K562 (cell line): ENCODE measurements at regions of chr5 and their contacts with region 1.

Region 1: DNA sequence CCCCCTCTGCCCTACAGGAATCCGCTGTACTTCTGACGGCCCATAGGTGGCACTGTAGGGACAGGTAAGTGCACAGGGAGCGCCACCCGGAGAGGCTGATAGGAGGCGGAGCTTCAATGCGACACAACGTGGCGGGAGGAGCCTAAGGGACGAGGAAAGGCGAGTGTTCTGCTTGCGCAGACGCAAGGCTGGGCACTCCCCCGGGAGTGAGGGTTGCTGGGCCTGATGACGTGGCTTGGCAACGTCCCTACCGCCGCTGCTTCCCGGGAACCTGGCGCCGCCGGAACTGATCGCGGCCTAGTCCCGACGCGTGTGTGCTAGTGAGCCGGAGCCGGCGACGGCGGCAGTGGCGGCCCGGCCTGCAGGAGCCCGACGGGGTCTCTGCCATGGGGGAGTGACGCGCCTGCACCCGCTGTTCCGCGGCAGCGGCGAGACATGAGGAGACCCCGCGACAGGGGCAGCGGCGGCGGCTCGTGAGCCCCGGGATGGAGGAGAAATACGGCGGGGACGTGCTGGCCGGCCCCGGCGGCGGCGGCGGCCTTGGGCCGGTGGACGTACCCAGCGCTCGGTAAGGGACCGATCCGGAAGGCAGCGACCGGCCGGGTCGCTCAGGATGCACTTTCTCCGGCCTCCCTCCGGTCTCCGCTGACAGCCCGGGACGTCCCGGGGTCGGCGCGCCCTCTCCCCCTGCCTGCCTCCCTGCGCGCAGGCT is at the start of gene SLC30A5:
- DNase-seq: peak; percentile 98 to 99 (median 98)
- ATAC-seq: peak; percentile 97
- H3K4me3 ChIP-seq: peak within 1 kb of the TSS; percentile 91
- H3K27ac ChIP-seq: peak within 1 kb of the TSS; percentile 91
- H3K4me1 ChIP-seq: peaks cover 21 to 25% of the 10 kb centered on the region in 2 experiments
- H3K27me3 ChIP-seq: no peaks in the 10 kb centered on the region
- CTCF ChIP-seq: peak; percentile 94 to 97 (median 96)
- EP300 ChIP-seq: no peak; the same call in none of the 2 replicates
- POLR2A ChIP-seq: peak; percentile 94
- RAD21 ChIP-seq: peak; percentile 86 to 87
- polyA plus RNA-seq, gene SLC30A5: 22.9 to 27.1 TPM

Region 2: GRCh38 chr5:68644971-68645370 is 449.0 kb before region 1 on chr5:
- CTCF ChIA-PET with region 1: no interaction called
- POLR2A ChIA-PET with region 1: no interaction called
- in situ Hi-C with region 1: no loop called
- intact Hi-C with region 1: no loop called
- DNase-seq: no peak
- ATAC-seq: no peak
- H3K4me3 ChIP-seq: no peak overlapping the region
- H3K27ac ChIP-seq: no peak overlapping the region
- H3K4me1 ChIP-seq: no peaks in the 10 kb centered on the region
- H3K27me3 ChIP-seq: peaks cover 0 to 4% of the 10 kb centered on the region in 2 experiments; a peak in 1 of 5 replicates
- CTCF ChIP-seq: no peak
- EP300 ChIP-seq: no peak
- POLR2A ChIP-seq: no peak
- RAD21 ChIP-seq: no peak

Region 3: GRCh38 chr5:69042915-69043658 is 50.8 kb before region 1 on chr5:
- CTCF ChIA-PET with region 1: no interaction called
- POLR2A ChIA-PET with region 1: interaction called, 3 read pairs
- in situ Hi-C with region 1: no loop called
- intact Hi-C with region 1: loop called (anchors 2 kb)
- DNase-seq: peak; percentile 71 to 93 (median 75)
- ATAC-seq: peak; percentile 78
- H3K4me3 ChIP-seq: no peak overlapping the region
- H3K27ac ChIP-seq: peak overlapping the region; percentile 31
- H3K4me1 ChIP-seq: peaks cover 4 to 26% of the 10 kb centered on the region in 2 experiments; a peak in 3 of 5 replicates
- H3K27me3 ChIP-seq: no peaks in the 10 kb centered on the region
- CTCF ChIP-seq: peak; percentile 65 to 91 (median 75)
- EP300 ChIP-seq: no peak
- POLR2A ChIP-seq: no peak
- RAD21 ChIP-seq: peak; percentile 89 to 91

Region 4: GRCh38 chr5:69083412-69083811 is 10.5 kb before region 1 on chr5:
- CTCF ChIA-PET with region 1: no interaction called
- POLR2A ChIA-PET with region 1: interaction called, 16 read pairs
- in situ Hi-C with region 1: no loop called
- intact Hi-C with region 1: no loop called
- DNase-seq: peak in 3 of 4 experiments; percentile 29 to 75 (median 45)
- ATAC-seq: peak; percentile 96
- H3K4me3 ChIP-seq: no peak overlapping the region
- H3K27ac ChIP-seq: no peak overlapping the region
- H3K4me1 ChIP-seq: peaks cover 0 to 19% of the 10 kb centered on the region in 2 experiments; a peak in 3 of 5 replicates
- H3K27me3 ChIP-seq: no peaks in the 10 kb centered on the region
- CTCF ChIP-seq: peak; percentile 59 to 80 (median 65)
- EP300 ChIP-seq: 0 out of 2 replicates have a peak, but pooled peaks have one; percentile 16
- POLR2A ChIP-seq: no peak
- RAD21 ChIP-seq: peak; percentile 57 to 82

Region 5: GRCh38 chr5:69152731-69153130 is 58.8 kb after region 1 on chr5:
- CTCF ChIA-PET with region 1: no interaction called
- POLR2A ChIA-PET with region 1: no interaction called
- in situ Hi-C with region 1: no loop called
- intact Hi-C with region 1: no loop called
- DNase-seq: no peak
- ATAC-seq: no peak
- H3K4me3 ChIP-seq: no peak overlapping the region
- H3K27ac ChIP-seq: no peak overlapping the region
- H3K4me1 ChIP-seq: no peaks in the 10 kb centered on the region
- H3K27me3 ChIP-seq: no peaks in the 10 kb centered on the region
- CTCF ChIP-seq: no peak
- EP300 ChIP-seq: no peak
- POLR2A ChIP-seq: no peak
- RAD21 ChIP-seq: no peak

Region 6: GRCh38 chr5:69166686-69167492 is 73.0 kb after region 1 on chr5 and contains the start of gene CCNB1:
- CTCF ChIA-PET with region 1: no interaction called
- POLR2A ChIA-PET with region 1: interaction called, 3 read pairs
- in situ Hi-C with region 1: no loop called
- intact Hi-C with region 1: loop called (anchors 2 kb)
- DNase-seq: peak; percentile 98 to 99 (median 99)
- ATAC-seq: peak; percentile 99
- H3K4me3 ChIP-seq: peak within 1 kb of the TSS; percentile 90
- H3K27ac ChIP-seq: peak within 1 kb of the TSS; percentile 94
- H3K4me1 ChIP-seq: peaks cover 4 to 8% of the 10 kb centered on the region in 2 experiments; a peak in 4 of 5 replicates
- H3K27me3 ChIP-seq: no peaks in the 10 kb centered on the region
- CTCF ChIP-seq: no peak
- EP300 ChIP-seq: no peak
- POLR2A ChIP-seq: peak; percentile 94
- RAD21 ChIP-seq: no peak
- polyA plus RNA-seq, gene CCNB1: 469 to 679 TPM

Region 7: GRCh38 chr5:69234457-69235268 is 140.7 kb after region 1 on chr5 and contains the start of gene CDK7:
- CTCF ChIA-PET with region 1: no interaction called
- POLR2A ChIA-PET with region 1: no interaction called
- in situ Hi-C with region 1: no loop called
- intact Hi-C with region 1: loop called (anchors 5 kb)
- DNase-seq: peak; percentile 94 to 96 (median 94)
- ATAC-seq: peak; percentile 98
- H3K4me3 ChIP-seq: peak within 1 kb of the TSS; percentile 73
- H3K27ac ChIP-seq: peak within 1 kb of the TSS; percentile 86
- H3K4me1 ChIP-seq: peaks cover 8 to 11% of the 10 kb centered on the region in 2 experiments
- H3K27me3 ChIP-seq: no peaks in the 10 kb centered on the region
- CTCF ChIP-seq: peak in 1 of 3 experiments; percentile 11; a peak in 1 of 6 replicates
- EP300 ChIP-seq: peak; percentile 4; the same call in 1 of the 2 replicates
- POLR2A ChIP-seq: peak; percentile 89
- RAD21 ChIP-seq: peak in 1 of 2 experiments; percentile 18; a peak in 1 of 4 replicates
- polyA plus RNA-seq, gene CDK7: 143 TPM

Region 8: GRCh38 chr5:69334793-69335268 is 240.9 kb after region 1 on chr5:
- CTCF ChIA-PET with region 1: no interaction called
- POLR2A ChIA-PET with region 1: no interaction called
- in situ Hi-C with region 1: no loop called
- intact Hi-C with region 1: loop called (anchors 1 kb)
- DNase-seq: peak; percentile 51 to 89 (median 70)
- ATAC-seq: peak; percentile 93
- H3K4me3 ChIP-seq: no peak overlapping the region
- H3K27ac ChIP-seq: no peak overlapping the region
- H3K4me1 ChIP-seq: peaks cover 7 to 33% of the 10 kb centered on the region in 2 experiments; a peak in 4 of 5 replicates
- H3K27me3 ChIP-seq: no peaks in the 10 kb centered on the region
- CTCF ChIP-seq: peak; percentile 80 to 93 (median 82)
- EP300 ChIP-seq: no peak
- POLR2A ChIP-seq: no peak
- RAD21 ChIP-seq: peak; percentile 48 to 86; a peak in 3 of 4 replicates

Region 9: DNA sequence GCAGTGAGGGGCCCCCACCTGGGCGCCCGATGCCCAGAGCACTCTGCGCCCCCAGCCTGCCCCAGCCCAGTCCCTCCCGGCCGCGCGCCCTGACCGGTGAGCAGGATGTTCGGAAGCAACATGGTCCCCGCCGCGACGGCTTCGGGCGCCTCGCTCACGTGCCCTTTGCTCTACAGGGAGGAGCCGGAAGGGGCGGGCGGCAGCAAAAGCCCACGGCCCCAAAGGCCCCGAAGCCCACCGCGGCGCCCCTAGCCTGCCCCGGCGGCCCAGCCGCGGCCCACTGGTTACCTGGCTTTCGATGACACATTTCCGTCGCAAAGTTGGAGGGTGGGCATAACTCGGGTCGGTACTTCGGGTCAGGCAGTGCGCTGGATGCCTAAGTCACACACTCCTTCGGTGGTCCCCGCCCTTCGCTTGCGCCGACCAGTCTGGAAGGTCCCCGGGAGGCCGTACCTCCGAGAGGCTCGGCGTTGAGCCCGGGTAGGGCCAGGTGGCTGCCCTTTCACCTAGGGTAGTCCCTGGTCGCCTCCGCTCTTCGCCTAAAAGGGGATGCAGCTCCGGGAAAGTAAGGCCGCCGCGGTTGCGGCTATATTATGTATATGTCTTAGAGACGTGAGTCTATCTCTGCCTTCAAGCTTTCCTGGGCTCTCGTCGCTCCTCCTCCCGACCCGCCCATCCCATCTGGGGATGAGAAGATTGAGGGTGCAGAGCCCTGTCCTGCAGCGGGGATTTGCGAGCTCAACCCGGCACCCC is 275.6 kb after region 1 on chr5 and contains the starts of genes AK6, RAD17 and TAF9:
- CTCF ChIA-PET with region 1: interaction called, 3 read pairs
- POLR2A ChIA-PET with region 1: interaction called, 3 read pairs
- in situ Hi-C with region 1: no loop called
- intact Hi-C with region 1: loop called (anchors 2 kb)
- DNase-seq: peak; percentile 87 to 95 (median 90)
- ATAC-seq: peak; percentile 90
- H3K4me3 ChIP-seq: peak within 1 kb of the TSS; percentile 70
- H3K27ac ChIP-seq: peak within 1 kb of the TSS; percentile 99
- H3K4me1 ChIP-seq: peaks cover 0 to 6% of the 10 kb centered on the region in 2 experiments; a peak in 4 of 5 replicates
- H3K27me3 ChIP-seq: no peaks in the 10 kb centered on the region
- CTCF ChIP-seq: no peak
- EP300 ChIP-seq: no peak
- POLR2A ChIP-seq: peak; percentile 93
- RAD21 ChIP-seq: no peak
- polyA plus RNA-seq, gene AK6: 613 to 669 TPM
- polyA plus RNA-seq, gene RAD17: 25.6 to 44.4 TPM
- polyA plus RNA-seq, gene TAF9: 519 to 566 TPM